ENCODE measurements at regions of chr1 and their contacts with region 1.

Region 1: GRCh38 chr1:37486680-37487618 is 12.6 kb downstream of the ZC3H12A start:
- DNase-seq: peak; percentile 83
- H3K4me3 Mint-ChIP-seq: no peak overlapping the region
- H3K27ac Mint-ChIP-seq: peak overlapping the region; percentile 48
- H3K4me1 Mint-ChIP-seq: peaks cover 16% of the 10 kb centered on the region
- H3K27me3 Mint-ChIP-seq: no peaks in the 10 kb centered on the region

Region 2: DNA sequence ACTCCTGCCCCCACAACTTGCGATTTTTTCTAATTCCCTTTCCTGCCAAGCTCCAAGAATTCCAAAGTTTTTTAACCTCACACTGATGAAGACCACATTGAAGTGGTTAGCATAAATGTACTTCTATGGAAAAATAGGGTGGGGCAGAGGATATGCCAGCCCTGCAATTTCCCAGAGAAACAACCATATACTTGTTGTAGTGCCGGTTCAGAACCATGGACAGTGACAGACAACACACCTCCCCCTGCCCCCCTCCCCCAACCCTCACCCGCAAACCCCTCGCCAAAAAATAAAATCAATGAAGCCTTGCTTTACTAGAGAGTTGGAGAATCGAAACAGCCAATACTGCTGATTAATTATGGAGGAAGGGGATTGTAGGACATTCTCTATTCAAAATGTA is 343.1 kb before region 1 on chr1:
- CTCF ChIA-PET with region 1: no interaction called
- intact Hi-C with region 1: no loop called
- DNase-seq: no peak
- H3K4me3 Mint-ChIP-seq: no peak overlapping the region
- H3K27ac Mint-ChIP-seq: no peak overlapping the region
- H3K4me1 Mint-ChIP-seq: no peaks in the 10 kb centered on the region
- H3K27me3 Mint-ChIP-seq: peaks cover 8% of the 10 kb centered on the region

Region 3: GRCh38 chr1:37449936-37450335 is 37.0 kb before region 1 on chr1:
- CTCF ChIA-PET with region 1: interaction called, 287 read pairs
- intact Hi-C with region 1: loop called (anchors 1 kb)
- DNase-seq: peak; percentile 66
- H3K4me3 Mint-ChIP-seq: no peak overlapping the region
- H3K27ac Mint-ChIP-seq: no peak overlapping the region
- H3K4me1 Mint-ChIP-seq: peaks cover 13% of the 10 kb centered on the region
- H3K27me3 Mint-ChIP-seq: peaks cover 6% of the 10 kb centered on the region

Region 4: GRCh38 chr1:37455516-37455915 is 31.4 kb before region 1 on chr1:
- CTCF ChIA-PET with region 1: interaction called, 287 read pairs
- intact Hi-C with region 1: loop called (anchors 1 kb)
- DNase-seq: no peak
- H3K4me3 Mint-ChIP-seq: no peak overlapping the region
- H3K27ac Mint-ChIP-seq: no peak overlapping the region
- H3K4me1 Mint-ChIP-seq: peaks cover 5% of the 10 kb centered on the region
- H3K27me3 Mint-ChIP-seq: no peaks in the 10 kb centered on the region

Region 5: DNA sequence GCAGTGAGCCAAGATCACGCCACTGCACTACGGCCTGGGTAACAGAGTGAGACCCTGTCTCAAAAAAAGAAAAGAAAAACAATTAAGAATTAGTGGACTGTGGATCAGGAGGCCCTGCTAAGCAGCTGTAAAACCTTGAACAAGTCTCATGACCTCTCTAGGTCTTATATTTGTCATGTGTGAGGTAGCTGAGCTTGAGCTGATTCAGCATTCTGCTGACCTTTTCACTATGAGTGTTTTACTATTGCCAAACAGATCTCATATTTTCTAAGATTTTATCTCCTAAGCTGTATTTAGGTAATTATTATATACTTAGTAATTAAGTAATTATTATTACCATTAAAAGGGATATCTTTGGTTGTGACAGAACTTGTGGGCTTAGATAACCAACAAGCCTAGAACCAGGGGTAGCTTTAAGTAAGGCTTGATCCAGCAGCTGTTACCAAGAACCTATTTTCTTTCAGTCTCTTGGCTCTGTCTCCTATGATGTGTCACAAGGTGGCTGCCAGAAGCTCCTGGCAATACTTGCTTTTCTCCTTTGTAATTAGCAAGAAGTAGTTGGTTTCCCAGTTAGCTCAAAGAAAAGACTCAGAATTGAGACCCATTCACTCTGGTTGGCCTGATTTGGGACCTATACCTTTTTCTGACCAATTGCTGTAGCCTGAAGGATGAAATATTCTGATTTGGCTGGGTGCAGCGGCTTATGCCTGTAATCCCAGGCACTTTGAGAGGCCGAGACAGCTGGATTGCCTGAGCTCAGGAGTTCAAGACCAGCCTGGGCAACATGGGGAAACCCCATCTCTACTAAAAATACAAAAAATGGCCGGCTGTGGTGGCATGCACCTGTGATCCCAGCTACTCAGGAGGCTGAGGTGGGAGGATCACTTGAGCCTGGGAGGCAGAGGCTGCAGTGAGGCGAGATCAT is 21.1 kb before region 1 on chr1:
- CTCF ChIA-PET with region 1: interaction called, 287 read pairs
- intact Hi-C with region 1: no loop called
- DNase-seq: no peak
- H3K4me3 Mint-ChIP-seq: no peak overlapping the region
- H3K27ac Mint-ChIP-seq: no peak overlapping the region
- H3K4me1 Mint-ChIP-seq: peaks cover 7% of the 10 kb centered on the region
- H3K27me3 Mint-ChIP-seq: no peaks in the 10 kb centered on the region

Region 6: DNA sequence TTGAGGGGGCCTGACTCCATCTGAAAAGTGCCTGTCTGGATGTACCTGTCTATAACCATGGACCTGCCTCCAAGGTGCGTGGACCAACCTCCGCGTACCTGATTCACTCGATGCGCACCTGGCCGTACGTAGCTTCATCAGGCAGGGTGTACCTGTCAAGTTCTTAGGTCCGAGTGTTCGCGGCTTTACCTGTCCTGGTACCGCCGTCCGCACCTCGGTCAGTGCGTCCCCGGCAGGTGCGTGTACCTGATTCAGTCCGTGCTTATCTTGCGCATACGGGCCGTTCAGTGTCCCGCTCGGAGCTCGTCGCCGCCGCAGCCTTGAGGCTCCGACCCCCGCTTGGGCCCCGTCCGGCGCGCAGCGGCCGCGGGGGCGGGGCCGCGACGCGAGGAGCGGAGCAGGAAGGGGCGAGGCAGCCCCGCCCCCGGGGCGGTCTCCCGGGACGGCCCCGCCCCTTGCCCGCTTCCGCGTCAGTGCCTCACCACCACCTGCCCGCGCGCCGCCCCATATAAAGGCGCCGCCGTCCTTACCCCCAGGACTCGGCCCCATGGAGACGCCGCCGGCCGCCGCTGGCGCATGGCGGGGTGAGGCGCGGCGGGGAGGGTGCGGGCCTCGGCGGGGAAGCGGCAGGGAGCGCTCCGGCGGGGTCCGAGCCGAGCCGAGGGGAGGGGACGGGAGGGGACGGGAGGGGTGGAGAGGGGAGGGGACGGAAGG is 12.7 kb before region 1 on chr1 and contains the start of gene ZC3H12A:
- CTCF ChIA-PET with region 1: interaction called, 127 read pairs
- intact Hi-C with region 1: no loop called
- DNase-seq: peak; percentile 89
- H3K4me3 Mint-ChIP-seq: peak within 1 kb of the TSS; percentile 87
- H3K27ac Mint-ChIP-seq: peak within 1 kb of the TSS; percentile 99
- H3K4me1 Mint-ChIP-seq: peaks cover 33% of the 10 kb centered on the region
- H3K27me3 Mint-ChIP-seq: no peaks in the 10 kb centered on the region
- total RNA-seq, gene ZC3H12A: 29.0 to 33.6 TPM

Region 7: GRCh38 chr1:37498872-37499617 is 12.1 kb after region 1 on chr1:
- CTCF ChIA-PET with region 1: interaction called, 83 read pairs
- intact Hi-C with region 1: no loop called
- DNase-seq: no peak
- H3K4me3 Mint-ChIP-seq: no peak overlapping the region
- H3K27ac Mint-ChIP-seq: no peak overlapping the region
- H3K4me1 Mint-ChIP-seq: peaks cover 12% of the 10 kb centered on the region
- H3K27me3 Mint-ChIP-seq: no peaks in the 10 kb centered on the region

Region 8: DNA sequence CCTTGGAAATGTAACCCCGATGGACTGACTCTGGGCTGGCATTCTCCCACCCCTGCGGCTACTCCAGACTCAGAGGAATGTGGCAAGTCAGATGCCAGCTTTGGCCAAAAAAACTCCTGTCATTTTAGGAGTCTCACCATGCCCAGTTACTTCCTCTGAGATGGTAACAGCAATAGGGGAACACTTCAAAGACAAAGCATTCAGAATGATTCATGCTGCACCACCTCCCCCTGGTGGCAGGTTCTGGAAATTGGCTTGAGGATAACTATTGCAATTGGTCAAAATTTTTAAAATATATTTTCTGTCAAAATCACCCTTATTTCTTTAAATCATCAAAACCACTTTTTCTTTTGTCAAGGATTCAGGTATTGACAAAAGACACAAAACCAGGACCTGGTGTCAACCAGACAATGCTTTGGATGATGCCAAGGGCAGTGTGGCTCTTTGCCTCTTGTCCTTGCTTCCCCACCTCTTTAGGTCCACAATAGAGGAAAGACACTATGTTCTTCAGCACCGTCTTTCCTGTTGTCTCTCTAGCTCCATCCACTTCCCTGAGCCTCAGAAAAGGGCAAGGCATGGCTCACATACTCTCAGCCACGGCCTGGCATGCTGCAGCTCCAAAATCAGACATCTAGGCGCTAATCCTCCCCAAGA is 195.5 kb after region 1 on chr1:
- CTCF ChIA-PET with region 1: interaction called, 10 read pairs
- intact Hi-C with region 1: loop called (anchors 5 kb)
- DNase-seq: peak; percentile 91
- H3K4me3 Mint-ChIP-seq: no peak overlapping the region
- H3K27ac Mint-ChIP-seq: no peak overlapping the region
- H3K4me1 Mint-ChIP-seq: peaks cover 3% of the 10 kb centered on the region
- H3K27me3 Mint-ChIP-seq: no peaks in the 10 kb centered on the region